Dorsolateral prefrontal cortex (tissue), 120 donors: ENCODE measurements at regions of chr11 and their contacts with region 1.

Region 1: GRCh38 chr11:19344751-19345518 is 104.2 kb upstream of the E2F8 start:
- DNase-seq: peak; percentile 49 to 86 (median 75)
- H3K4me3 ChIP-seq: peak overlapping the region; percentile 52 to 93 (median 74)
- H3K27ac ChIP-seq: peak overlapping the region in 20 of 59 donors; percentile 2 to 75 (median 30)
- H3K27me3 ChIP-seq: no peaks in the 10 kb centered on the region
- CTCF ChIP-seq: peak in 2 of 56 donors; percentile 3 to 5

Region 2: DNA sequence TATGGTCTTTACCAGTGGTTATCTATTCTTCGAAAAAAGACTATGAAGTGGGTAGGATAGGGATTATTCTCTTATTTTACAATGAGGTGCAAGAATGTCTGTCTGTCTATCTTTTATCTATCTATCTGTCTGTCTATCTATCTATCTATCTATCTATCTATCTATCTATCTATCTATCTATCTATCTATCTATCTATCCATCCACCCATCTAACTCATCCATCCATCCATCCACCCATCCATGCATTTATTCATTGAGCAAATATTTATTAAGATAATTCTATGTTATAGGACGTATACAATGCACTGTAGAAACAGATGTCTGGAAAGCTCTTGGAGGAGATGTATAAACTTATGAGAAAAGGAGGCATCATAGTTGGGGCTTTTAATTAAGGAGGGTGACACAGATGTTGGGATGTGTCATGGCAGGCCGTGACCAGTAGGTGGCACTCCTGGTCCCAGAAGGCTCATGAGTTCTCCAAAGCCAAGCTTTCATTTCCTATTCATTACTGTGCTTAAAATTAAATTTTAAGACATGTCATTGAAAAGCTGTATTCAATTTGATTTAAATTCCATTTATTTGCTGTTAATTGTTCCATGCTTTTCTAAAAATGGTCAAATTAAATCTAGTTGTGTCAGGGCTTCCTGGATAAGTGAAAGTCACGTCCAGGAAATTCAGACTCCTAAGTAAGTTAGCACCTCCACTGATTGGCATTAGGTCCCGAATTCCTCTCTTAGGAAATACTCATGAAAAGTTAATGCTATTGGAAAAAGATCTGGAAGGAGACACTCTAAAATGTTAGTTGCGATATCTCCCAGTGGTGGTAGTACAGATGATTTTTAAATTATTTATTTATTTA is 85.2 kb before region 1 on chr11:
- intact Hi-C with region 1: no loop called
- DNase-seq: peak; percentile 30 to 86 (median 75)
- H3K4me3 ChIP-seq: peak overlapping the region in 31 of 59 donors; percentile 2 to 51 (median 24)
- H3K27ac ChIP-seq: no peak overlapping the region
- H3K27me3 ChIP-seq: no peaks in the 10 kb centered on the region
- CTCF ChIP-seq: peak; percentile 74 to 98 (median 94)

Region 3: DNA sequence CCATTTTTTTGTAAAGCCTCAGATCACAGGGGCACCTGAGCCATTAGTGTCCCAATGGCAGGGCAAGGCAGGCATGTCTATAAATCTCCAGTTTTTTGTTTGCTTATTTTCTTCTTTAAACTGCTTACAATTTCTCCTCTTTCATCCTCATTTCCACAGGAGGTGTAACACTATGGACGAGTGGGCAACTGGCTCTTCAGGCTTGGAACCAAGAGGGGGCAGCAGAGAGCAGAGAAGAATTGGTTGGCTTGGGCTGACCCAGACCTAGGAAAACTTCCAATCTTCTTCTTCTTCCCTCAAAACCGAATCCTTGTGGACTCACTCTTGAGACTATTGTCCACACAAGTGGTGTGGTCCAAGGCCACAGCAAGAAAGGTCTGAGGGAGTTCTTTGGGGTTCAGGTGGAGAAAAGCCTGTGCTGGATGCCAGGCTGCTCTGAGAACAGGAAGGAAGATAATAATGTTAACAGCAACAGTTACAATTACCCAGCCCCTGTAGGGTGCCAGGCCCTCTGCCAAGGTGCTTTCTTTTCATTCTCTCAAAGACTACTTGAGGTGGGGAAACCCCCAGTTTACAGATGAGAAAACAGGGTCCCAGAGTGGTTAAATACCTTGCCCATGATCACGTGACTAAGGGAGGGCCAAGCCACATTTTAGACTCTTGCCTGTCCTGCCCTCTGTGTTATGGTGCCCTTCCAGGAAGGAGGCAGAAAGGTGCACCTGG is 33.5 kb before region 1 on chr11:
- intact Hi-C with region 1: loop called in 1 of 2 experiments (anchors 5 kb)
- DNase-seq: peak in 9 of 10 donors; percentile 44 to 80 (median 72)
- H3K4me3 ChIP-seq: no peak overlapping the region
- H3K27ac ChIP-seq: no peak overlapping the region
- H3K27me3 ChIP-seq: peaks cover 0 to 14% (median 0%) of the 10 kb centered on the region in 45 donors
- CTCF ChIP-seq: peak; percentile 60 to 94 (median 87)

Region 4: DNA sequence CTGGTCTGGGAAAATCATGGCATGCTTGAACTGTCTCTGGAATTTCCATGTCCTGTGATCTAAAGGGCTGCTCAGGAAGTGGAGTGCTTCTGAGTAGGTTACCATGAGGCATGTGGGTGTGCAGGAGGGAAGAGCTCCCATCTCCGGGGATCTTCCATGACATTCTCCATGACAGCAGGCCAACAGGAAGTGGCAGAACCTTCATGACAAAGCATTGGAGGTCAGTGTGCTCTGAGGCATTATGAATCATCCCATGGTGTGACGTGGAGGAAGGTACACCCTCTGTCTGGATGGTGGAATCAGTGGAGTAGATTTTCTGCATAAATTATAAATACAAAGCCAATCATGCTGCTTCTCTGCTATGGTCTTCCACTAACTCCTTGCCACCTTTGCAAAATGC is 35.4 kb after region 1 on chr11:
- intact Hi-C with region 1: loop called (anchors 5 kb)
- DNase-seq: no peak
- H3K4me3 ChIP-seq: no peak overlapping the region
- H3K27ac ChIP-seq: no peak overlapping the region
- H3K27me3 ChIP-seq: no peaks in the 10 kb centered on the region
- CTCF ChIP-seq: no peak

Region 5: GRCh38 chr11:19474954-19475715 is 130.2 kb after region 1 on chr11:
- intact Hi-C with region 1: loop called (anchors 1 to 10 kb)
- DNase-seq: peak in 9 of 10 donors; percentile 39 to 81 (median 65)
- H3K4me3 ChIP-seq: peak overlapping the region in 29 of 59 donors; percentile 2 to 49 (median 20)
- H3K27ac ChIP-seq: peak overlapping the region in 58 of 59 donors; percentile 40 to 97 (median 89)
- H3K27me3 ChIP-seq: no peaks in the 10 kb centered on the region
- CTCF ChIP-seq: peak in 4 of 56 donors; percentile 4 to 29 (median 8)

Region 6: DNA sequence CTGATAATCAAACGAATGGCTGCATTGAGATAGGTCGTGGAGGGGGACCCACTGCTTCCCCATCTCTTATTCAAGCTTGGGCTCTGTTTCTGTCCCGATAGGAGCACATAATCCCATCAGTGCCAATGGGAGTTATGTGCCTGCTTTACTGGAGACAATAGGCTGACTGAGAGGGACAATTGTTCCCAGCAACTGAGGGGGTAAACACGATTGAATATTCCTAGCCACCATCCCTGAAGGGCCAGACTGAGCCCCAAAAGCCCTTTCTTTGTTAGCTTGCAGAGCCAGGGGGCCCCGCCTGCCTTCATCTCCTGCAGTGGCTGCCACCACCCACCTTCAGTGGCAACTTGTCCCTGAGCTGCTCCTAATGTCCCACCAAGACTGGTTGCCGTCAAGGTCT is 194.9 kb after region 1 on chr11:
- intact Hi-C with region 1: loop called in 1 of 2 experiments (anchors 5 kb)
- DNase-seq: peak in 1 of 10 donors; percentile 30
- H3K4me3 ChIP-seq: no peak overlapping the region
- H3K27ac ChIP-seq: peak overlapping the region in 49 of 59 donors; percentile 12 to 87 (median 72)
- H3K27me3 ChIP-seq: no peaks in the 10 kb centered on the region
- CTCF ChIP-seq: no peak